Sciatic nerve (tissue), 2 donors: ENCODE measurements at regions of chr15 and their contacts with region 1.

Region 1: DNA sequence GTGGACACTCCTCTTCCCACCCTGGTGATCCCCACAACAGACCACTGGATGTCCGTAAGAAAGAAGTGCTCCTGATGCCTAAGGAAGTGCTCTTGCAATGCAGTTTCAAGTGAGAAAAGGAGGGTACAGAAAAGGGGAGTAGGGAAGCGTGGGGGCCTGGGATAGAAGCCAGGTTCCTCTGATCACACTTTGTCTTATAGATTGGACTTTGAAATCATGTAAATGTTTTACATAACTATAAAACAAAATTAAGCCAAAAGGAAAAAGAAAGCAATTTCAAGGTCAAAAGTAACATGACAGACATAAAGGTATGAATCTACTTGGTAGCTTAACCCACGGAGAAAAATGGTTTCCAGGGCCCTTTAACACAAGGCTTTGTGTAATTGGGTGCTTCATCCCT is 107.3 kb upstream of the TRPM1 start:
- DNase-seq: no peak
- ATAC-seq: no peak

Region 2: GRCh38 chr15:30859091-30859874 is 349.5 kb before region 1 on chr15:
- intact Hi-C with region 1: no loop called
- DNase-seq: no peak
- ATAC-seq: no peak

Region 3: DNA sequence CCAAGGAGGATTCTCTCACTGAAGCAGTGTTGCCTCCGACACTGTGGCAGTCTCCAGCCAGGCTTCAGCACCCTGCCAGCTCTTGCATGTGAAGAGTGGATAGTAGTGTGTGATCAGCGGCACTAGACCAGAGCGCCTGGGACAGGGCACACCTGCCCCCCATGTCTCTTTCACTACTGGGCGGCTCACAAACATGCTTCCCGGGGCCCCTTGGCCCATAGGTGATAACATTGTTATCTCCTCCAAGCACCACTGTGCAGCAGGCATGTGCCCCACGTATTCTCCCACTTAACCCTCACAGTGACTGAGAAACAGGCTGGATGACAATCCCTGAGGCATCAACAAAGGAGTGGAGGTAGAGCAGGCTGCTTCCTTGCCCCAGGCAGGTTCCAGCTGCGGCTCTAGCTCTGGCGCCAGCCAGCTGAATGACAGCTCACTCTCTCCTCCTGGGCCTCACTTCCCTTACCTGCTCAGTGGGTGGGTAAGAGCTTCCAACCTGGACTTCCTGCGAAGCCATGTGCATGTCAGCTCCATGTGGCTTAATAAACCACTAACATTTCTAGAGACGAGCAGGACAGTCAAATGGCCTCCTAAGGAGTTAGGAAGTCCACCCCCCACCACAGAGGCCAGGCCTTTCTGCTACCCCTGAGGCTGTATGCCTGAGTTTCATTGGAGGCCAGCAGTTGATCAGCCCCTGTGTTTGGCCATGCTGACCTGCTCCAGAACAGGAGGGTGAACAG is 155.7 kb after region 1 on chr15:
- intact Hi-C with region 1: loop called (anchors 1 kb)
- DNase-seq: no peak
- ATAC-seq: no peak